Activated B cell treated with CpG ODN at 0.5 μM for 24 hours (primary cell): ENCODE measurements at regions of chr19 and their contacts with region 1.

Region 1: DNA sequence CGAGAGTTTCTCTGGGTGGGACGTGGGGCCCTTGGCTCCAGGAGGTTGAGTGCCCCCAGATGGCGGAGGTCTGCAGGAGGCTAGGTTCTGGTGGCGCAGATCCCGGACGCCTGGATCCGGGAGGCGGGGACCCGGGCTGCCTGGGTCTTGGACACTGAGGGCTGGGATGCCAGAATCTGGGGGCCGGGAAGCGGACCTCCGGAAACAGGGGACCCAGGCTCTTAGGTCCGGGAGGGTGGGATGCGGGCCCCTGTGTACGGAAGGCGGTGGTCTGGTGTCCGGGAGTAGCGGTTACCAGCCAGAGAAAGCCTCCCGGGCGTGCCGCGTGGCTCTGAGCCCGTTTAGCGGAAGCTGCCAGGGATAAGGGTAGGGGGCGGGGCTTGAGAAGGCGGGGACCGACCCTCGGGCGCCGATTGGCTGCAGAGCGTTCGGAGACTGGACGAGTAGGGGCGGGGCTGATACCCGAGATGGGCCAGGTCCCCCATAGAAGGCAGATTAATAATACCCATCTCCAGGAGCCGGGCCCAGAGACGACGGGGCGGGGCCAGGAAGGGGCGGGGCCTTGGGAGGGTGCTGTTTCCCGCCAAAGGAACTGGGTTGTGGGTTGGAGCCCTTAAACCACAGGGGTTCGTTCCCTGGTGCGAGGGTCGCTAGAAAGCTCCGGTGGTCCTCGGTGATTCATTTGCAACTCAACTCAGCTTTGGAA is at the start of gene SLC1A5:
- DNase-seq: peak; percentile 96
- ATAC-seq: peak; percentile 83
- H3K4me3 Mint-ChIP-seq: peak within 1 kb of the TSS; percentile 95
- H3K27ac Mint-ChIP-seq: peak within 1 kb of the TSS; percentile 95
- H3K4me1 Mint-ChIP-seq: peaks cover 48% of the 10 kb centered on the region
- H3K27me3 Mint-ChIP-seq: no peaks in the 10 kb centered on the region
- CTCF ChIP-seq: no peak
- total RNA-seq, gene SLC1A5: 70.7 and 77.9 TPM in 2 replicates

Region 2: DNA sequence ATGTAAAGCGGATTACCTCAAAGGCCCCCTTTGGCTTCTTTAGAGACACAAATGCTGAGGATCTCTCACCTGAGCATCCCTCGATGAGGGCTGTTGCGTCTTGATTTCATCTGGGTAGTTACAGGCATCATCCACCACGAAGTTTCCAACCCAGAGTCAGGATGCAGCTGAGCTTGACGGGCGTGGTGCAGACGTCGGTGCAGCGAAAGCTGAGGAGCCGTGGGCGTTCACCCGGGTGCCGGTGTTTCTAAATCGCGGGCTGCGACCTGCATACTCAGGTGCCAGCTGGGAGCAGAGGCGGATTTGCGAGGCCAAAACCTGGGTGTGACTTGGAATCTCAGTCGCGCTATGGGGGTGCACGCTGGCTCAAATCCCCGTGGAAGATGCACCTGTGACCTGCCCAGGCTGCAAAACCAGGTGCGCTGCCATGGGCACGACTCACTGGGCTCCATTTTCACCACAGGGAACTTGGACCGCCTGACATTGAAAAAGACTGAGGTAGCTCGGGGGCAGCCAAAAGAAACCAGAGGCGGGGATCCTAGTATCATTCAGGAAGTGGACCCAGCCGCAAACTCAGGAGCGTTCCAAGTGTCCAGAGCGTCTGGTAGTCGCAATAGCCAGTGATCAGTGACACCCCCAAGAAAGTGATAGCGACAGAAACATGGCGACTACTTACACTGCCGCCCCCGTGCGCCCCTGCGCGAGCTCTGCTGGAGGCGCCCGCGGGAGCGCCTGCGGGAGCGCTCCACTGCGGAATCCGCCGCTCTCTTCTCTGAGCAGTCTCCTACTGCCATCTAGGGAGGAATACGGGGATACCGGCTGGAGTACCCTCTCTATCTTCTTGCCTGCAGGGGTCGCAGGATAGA is 711.2 kb before region 1 on chr19:
- CTCF ChIA-PET with region 1: no interaction called
- POLR2A ChIA-PET with region 1: no interaction called
- intact Hi-C with region 1: no loop called
- DNase-seq: no peak
- ATAC-seq: no peak
- H3K4me3 Mint-ChIP-seq: no peak overlapping the region
- H3K27ac Mint-ChIP-seq: no peak overlapping the region
- H3K4me1 Mint-ChIP-seq: no peaks in the 10 kb centered on the region
- H3K27me3 Mint-ChIP-seq: peaks cover 68% of the 10 kb centered on the region
- CTCF ChIP-seq: no peak

Region 3: GRCh38 chr19:46600384-46601317 is 187.8 kb before region 1 on chr19:
- CTCF ChIA-PET with region 1: no interaction called
- POLR2A ChIA-PET with region 1: interaction called, 19 read pairs
- intact Hi-C with region 1: no loop called
- DNase-seq: peak; percentile 99
- ATAC-seq: peak; percentile 90
- H3K4me3 Mint-ChIP-seq: peak overlapping the region; percentile 99
- H3K27ac Mint-ChIP-seq: peak overlapping the region; percentile 100
- H3K4me1 Mint-ChIP-seq: peaks cover 30% of the 10 kb centered on the region
- H3K27me3 Mint-ChIP-seq: no peaks in the 10 kb centered on the region
- CTCF ChIP-seq: no peak

Region 4: DNA sequence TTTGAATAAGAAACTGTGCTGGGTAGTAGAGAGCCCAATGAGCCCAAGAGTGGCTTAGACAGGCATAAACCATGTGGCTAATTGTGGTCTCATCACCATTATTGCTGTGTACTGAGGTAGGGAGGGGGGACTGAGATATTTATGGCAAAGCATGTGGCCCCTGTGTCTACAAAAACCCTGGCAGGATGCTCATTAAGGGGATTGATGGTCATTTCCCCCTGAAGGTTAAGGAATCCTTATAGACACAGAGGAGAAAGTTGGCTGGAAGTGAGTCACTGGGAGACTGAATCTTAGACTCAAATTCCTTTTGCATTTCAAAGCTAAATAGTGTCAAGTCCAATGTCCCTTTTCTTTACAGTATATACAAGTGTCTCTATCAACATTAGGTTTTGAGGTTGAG is 117.6 kb before region 1 on chr19:
- CTCF ChIA-PET with region 1: no interaction called
- POLR2A ChIA-PET with region 1: no interaction called
- intact Hi-C with region 1: no loop called
- DNase-seq: no peak
- ATAC-seq: no peak
- H3K4me3 Mint-ChIP-seq: no peak overlapping the region
- H3K27ac Mint-ChIP-seq: no peak overlapping the region
- H3K4me1 Mint-ChIP-seq: no peaks in the 10 kb centered on the region
- H3K27me3 Mint-ChIP-seq: no peaks in the 10 kb centered on the region
- CTCF ChIP-seq: no peak

Region 5: DNA sequence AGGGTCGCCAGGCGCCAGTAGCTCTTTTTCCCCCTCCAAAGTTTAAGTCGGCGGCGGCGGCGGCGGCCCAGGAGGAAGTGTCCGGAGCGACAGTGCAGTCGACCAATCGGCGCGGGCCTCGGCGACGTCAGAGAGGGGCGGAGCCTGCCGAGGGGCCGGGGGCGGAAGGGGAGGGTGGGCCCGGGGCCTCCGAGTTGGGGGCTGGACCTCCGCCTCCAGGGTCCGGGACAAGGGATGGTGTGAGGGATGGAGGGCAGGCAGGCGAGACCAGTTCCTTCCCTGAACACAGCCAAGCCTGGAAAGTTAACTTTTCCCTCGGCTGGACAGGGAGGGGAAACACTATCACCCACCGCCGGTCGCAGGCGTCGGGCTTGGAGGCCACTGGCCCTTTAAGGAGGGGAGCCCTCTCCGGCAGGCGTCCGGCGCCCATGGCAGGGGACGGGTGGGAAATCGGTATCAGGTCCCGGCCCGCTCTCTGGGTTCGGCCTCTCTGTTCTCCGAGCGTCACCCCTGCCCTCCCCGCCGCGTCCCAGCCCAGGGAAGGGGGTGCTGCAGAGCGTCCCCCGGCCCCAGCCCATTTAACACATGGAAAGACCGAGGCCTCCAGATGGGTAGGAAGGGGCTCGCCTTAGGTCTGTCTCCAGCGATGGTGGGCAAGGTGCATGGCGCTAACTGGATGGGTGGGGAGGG is 71.2 kb before region 1 on chr19 and contains the start of gene PRKD2:
- CTCF ChIA-PET with region 1: no interaction called
- POLR2A ChIA-PET with region 1: interaction called, 9 read pairs
- intact Hi-C with region 1: loop called (anchors 2 kb)
- DNase-seq: peak; percentile 92
- ATAC-seq: peak; percentile 47
- H3K4me3 Mint-ChIP-seq: peak within 1 kb of the TSS; percentile 94
- H3K27ac Mint-ChIP-seq: peak within 1 kb of the TSS; percentile 97
- H3K4me1 Mint-ChIP-seq: peaks cover 76% of the 10 kb centered on the region
- H3K27me3 Mint-ChIP-seq: no peaks in the 10 kb centered on the region
- CTCF ChIP-seq: no peak
- total RNA-seq, gene PRKD2: 157 and 191 TPM in 2 replicates

Region 6: GRCh38 chr19:46753420-46754155 is 34.8 kb before region 1 on chr19:
- CTCF ChIA-PET with region 1: interaction called, 10 read pairs
- POLR2A ChIA-PET with region 1: interaction called, 4 read pairs
- intact Hi-C with region 1: loop called (anchors 5 kb)
- DNase-seq: peak; percentile 48
- ATAC-seq: peak; percentile 87
- H3K4me3 Mint-ChIP-seq: no peak overlapping the region
- H3K27ac Mint-ChIP-seq: no peak overlapping the region
- H3K4me1 Mint-ChIP-seq: peaks cover 24% of the 10 kb centered on the region
- H3K27me3 Mint-ChIP-seq: no peaks in the 10 kb centered on the region
- CTCF ChIP-seq: no peak

Region 7: GRCh38 chr19:46840136-46840942 is 51.9 kb after region 1 on chr19:
- CTCF ChIA-PET with region 1: interaction called, 9 read pairs
- POLR2A ChIA-PET with region 1: interaction called, 17 read pairs
- intact Hi-C with region 1: loop called (anchors 1 kb)
- DNase-seq: peak; percentile 32
- ATAC-seq: peak; percentile 88
- H3K4me3 Mint-ChIP-seq: no peak overlapping the region
- H3K27ac Mint-ChIP-seq: no peak overlapping the region
- H3K4me1 Mint-ChIP-seq: peaks cover 5% of the 10 kb centered on the region
- H3K27me3 Mint-ChIP-seq: no peaks in the 10 kb centered on the region
- CTCF ChIP-seq: peak; percentile 16

Region 8: GRCh38 chr19:47195434-47195833 is 407.0 kb after region 1 on chr19:
- CTCF ChIA-PET with region 1: no interaction called
- POLR2A ChIA-PET with region 1: interaction called, 12 read pairs
- intact Hi-C with region 1: no loop called
- DNase-seq: no peak
- ATAC-seq: no peak
- H3K4me3 Mint-ChIP-seq: no peak overlapping the region
- H3K27ac Mint-ChIP-seq: no peak overlapping the region
- H3K4me1 Mint-ChIP-seq: no peaks in the 10 kb centered on the region
- H3K27me3 Mint-ChIP-seq: no peaks in the 10 kb centered on the region
- CTCF ChIP-seq: no peak

Region 9: GRCh38 chr19:47256688-47257443 is 468.5 kb after region 1 on chr19:
- CTCF ChIA-PET with region 1: no interaction called
- POLR2A ChIA-PET with region 1: interaction called, 15 read pairs
- intact Hi-C with region 1: no loop called
- DNase-seq: peak; percentile 99
- ATAC-seq: peak; percentile 82
- H3K4me3 Mint-ChIP-seq: peak overlapping the region; percentile 93
- H3K27ac Mint-ChIP-seq: peak overlapping the region; percentile 92
- H3K4me1 Mint-ChIP-seq: peaks cover 39% of the 10 kb centered on the region
- H3K27me3 Mint-ChIP-seq: no peaks in the 10 kb centered on the region
- CTCF ChIP-seq: no peak